ENCODE measurements at regions of chr11 and their contacts with region 1.

Region 1: GRCh38 chr11:72222907-72223614 is 1.5 kb upstream of the INPPL1 start:
- DNase-seq: peak; percentile 94
- H3K4me3 Mint-ChIP-seq: peak overlapping the region; percentile 87
- H3K27ac Mint-ChIP-seq: peak overlapping the region; percentile 39
- H3K4me1 Mint-ChIP-seq: peaks cover 8% of the 10 kb centered on the region
- H3K27me3 Mint-ChIP-seq: peaks cover 5% of the 10 kb centered on the region
- CTCF ChIP-seq: no peak

Region 2: GRCh38 chr11:72024069-72024754 is 198.8 kb before region 1 on chr11:
- CTCF ChIA-PET with region 1: interaction called, 11 read pairs
- POLR2A ChIA-PET with region 1: interaction called, 3 read pairs
- intact Hi-C with region 1: no loop called
- DNase-seq: no peak
- H3K4me3 Mint-ChIP-seq: no peak overlapping the region
- H3K27ac Mint-ChIP-seq: peak overlapping the region; percentile 19
- H3K4me1 Mint-ChIP-seq: peaks cover 4% of the 10 kb centered on the region
- H3K27me3 Mint-ChIP-seq: no peaks in the 10 kb centered on the region
- CTCF ChIP-seq: no peak

Region 3: GRCh38 chr11:72085621-72086351 is 137.3 kb before region 1 on chr11:
- CTCF ChIA-PET with region 1: interaction called, 3 read pairs
- POLR2A ChIA-PET with region 1: interaction called, 14 read pairs
- intact Hi-C with region 1: no loop called
- DNase-seq: no peak
- H3K4me3 Mint-ChIP-seq: no peak overlapping the region
- H3K27ac Mint-ChIP-seq: no peak overlapping the region
- H3K4me1 Mint-ChIP-seq: peaks cover 23% of the 10 kb centered on the region
- H3K27me3 Mint-ChIP-seq: no peaks in the 10 kb centered on the region
- CTCF ChIP-seq: no peak

Region 4: DNA sequence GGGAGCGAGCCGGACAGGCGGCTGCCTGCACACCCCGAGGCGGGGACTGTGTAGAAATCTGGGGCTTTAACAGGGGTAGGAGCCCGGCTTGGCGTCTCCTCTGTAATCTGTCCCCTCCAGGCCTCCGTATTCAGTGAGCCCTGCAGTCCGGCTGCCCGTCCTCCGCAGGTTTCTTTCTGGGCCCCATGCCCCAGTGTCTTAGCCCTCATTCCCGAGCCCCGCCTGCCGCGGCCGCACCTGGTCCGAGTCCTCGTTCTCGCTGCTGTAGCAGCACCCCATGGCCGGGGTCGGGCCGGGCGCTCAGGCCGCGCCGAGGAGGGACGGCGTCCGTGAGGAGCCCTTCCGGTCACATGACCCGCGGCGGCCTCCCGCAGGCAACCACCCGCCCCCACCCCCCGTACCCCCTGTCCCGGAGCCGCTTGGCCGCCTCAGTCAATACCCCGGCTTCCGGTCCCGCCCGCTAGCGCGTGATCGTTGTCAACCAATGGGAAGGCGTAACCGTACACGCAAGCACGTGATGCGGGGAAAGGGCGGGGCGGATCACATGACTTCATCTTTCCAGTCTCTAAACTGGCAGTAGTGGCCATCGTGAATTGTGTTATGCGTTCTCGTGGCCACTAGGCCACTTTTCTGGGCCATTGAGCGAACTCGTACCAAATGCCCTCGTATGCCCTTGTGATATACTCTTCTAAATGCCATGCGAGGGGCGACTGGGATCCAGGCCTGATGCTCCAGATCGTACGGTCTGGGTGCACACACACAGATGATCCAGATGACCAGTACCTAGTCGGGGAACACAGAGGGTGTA is 119.9 kb before region 1 on chr11 and contains the start of gene LAMTOR1:
- CTCF ChIA-PET with region 1: no interaction called
- POLR2A ChIA-PET with region 1: interaction called, 4 read pairs
- intact Hi-C with region 1: loop called (anchors 2 kb)
- DNase-seq: peak; percentile 98
- H3K4me3 Mint-ChIP-seq: peak within 1 kb of the TSS; percentile 100
- H3K27ac Mint-ChIP-seq: peak within 1 kb of the TSS; percentile 100
- H3K4me1 Mint-ChIP-seq: peaks cover 43% of the 10 kb centered on the region
- H3K27me3 Mint-ChIP-seq: no peaks in the 10 kb centered on the region
- CTCF ChIP-seq: peak; percentile 29
- total RNA-seq, gene LAMTOR1: 76.9 and 82.4 TPM in 2 replicates

Region 5: DNA sequence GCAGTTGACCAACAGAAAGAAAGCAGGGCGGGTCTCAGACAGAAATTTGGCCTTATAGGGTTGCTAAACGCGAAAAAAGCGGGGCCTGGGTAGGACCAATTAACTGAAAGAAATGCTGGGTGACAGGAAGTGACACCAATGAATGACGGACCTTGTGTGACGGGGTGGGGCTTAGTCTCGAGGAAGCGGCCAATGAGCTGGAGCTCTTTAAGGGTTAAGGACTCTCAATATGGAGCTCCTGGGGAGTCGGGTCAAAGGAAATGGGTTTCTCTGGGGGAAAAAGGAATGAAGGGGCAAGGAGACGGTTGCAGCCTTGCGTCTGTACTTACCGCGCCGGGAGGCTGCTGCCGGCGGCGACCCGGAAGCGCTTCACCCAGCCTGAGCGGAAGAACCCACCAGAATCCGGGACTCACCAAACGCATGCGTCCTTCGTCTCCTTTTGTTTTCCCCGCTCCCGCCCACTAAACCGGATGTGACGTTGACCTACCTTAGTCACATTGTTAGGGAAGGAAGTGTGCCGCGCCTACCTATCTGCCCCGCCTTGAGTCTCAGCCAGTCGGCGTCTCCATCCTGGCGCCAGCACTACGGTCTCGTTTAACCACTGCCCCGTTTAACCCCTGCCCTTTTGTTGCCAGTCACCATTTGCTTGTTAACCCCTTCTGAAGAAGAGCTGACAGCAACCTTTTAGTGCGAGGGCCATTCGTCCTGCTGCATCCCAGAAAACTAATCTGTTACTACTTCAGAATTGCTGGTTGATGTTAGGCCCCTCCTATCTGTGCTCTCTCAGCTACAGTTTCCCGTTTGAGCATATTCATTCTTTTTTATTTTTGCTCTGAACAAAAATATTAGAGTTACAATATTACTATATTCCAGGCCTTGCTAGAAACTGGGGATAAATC is 110.5 kb before region 1 on chr11 and contains the start of gene ANAPC15:
- CTCF ChIA-PET with region 1: no interaction called
- POLR2A ChIA-PET with region 1: interaction called, 27 read pairs
- intact Hi-C with region 1: no loop called
- DNase-seq: peak; percentile 100
- H3K4me3 Mint-ChIP-seq: peak within 1 kb of the TSS; percentile 98
- H3K27ac Mint-ChIP-seq: peak within 1 kb of the TSS; percentile 100
- H3K4me1 Mint-ChIP-seq: peaks cover 20% of the 10 kb centered on the region
- H3K27me3 Mint-ChIP-seq: no peaks in the 10 kb centered on the region
- CTCF ChIP-seq: no peak
- total RNA-seq, gene ANAPC15: 52.2 and 63.6 TPM in 2 replicates

Region 6: GRCh38 chr11:72238040-72238450 is 15.0 kb after region 1 on chr11:
- CTCF ChIA-PET with region 1: interaction called, 3 read pairs
- POLR2A ChIA-PET with region 1: interaction called, 25 read pairs
- intact Hi-C with region 1: no loop called
- DNase-seq: peak; percentile 60
- H3K4me3 Mint-ChIP-seq: no peak overlapping the region
- H3K27ac Mint-ChIP-seq: no peak overlapping the region
- H3K4me1 Mint-ChIP-seq: peaks cover 9% of the 10 kb centered on the region
- H3K27me3 Mint-ChIP-seq: no peaks in the 10 kb centered on the region
- CTCF ChIP-seq: peak; percentile 60

Region 7: DNA sequence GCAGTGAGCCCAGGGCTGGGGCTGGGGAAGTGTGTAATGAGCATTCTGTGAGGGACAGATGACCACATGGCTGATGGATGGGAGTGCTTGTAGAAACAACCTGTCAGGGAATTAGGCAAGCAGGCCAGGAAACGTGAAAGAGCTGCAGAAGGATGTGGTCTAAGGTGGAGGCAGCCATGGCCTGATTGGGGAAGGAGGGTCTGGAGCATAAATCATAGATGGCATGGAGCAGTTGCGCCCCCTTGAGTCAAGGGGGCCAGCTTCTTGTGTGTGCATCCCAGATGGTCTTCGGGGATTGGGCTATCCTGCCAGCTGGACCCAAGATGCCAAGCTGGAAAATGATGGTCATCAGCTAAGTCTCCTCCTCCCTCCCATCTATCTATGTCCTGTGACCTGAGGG is 330.6 kb after region 1 on chr11:
- CTCF ChIA-PET with region 1: no interaction called
- POLR2A ChIA-PET with region 1: no interaction called
- intact Hi-C with region 1: no loop called
- DNase-seq: peak; percentile 22
- H3K4me3 Mint-ChIP-seq: no peak overlapping the region
- H3K27ac Mint-ChIP-seq: no peak overlapping the region
- H3K4me1 Mint-ChIP-seq: peaks cover 14% of the 10 kb centered on the region
- H3K27me3 Mint-ChIP-seq: no peaks in the 10 kb centered on the region
- CTCF ChIP-seq: no peak

Measured in MCF 10A (cell line).